Mammary epithelial cell (primary cell): ENCODE measurements at regions of chr5 and their contacts with region 1.

Region 1: DNA sequence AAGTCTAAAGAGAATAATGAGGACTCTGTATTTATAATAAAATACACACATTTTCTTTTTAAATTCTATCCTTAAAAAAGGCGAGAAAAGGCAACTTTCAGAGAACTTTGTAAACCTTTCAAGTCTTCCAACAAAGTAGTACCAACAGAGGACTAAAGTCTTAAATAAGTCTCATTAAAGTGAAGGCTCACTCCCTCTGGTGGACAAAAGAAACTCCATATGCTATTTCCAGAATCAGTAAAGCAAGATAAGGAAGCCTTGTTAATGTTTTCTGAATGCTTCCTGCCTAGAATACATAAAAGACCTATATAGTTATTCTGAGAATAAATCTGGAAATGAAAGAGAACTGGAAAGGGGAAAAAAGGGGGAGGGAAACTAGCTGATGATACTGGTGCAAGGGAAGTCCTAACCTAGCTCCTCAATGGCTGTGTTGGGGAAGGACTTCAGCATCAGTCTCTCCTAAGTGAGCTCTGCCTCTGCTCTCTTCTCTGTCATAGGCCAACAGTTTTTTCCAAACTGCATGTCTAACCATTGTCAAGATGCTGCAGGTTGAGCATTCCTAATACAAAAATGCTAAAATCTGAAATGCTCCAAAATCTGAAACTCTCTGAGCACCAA is 7.2 kb downstream of the HMGCS1 start:
- DNase-seq: no peak
- H3K4me3 ChIP-seq: no peak overlapping the region
- H3K27ac ChIP-seq: no peak overlapping the region
- H3K4me1 ChIP-seq: peaks cover 34% of the 10 kb centered on the region
- H3K27me3 ChIP-seq: no peaks in the 10 kb centered on the region
- CTCF ChIP-seq: peak; percentile 59 to 67

Region 2: DNA sequence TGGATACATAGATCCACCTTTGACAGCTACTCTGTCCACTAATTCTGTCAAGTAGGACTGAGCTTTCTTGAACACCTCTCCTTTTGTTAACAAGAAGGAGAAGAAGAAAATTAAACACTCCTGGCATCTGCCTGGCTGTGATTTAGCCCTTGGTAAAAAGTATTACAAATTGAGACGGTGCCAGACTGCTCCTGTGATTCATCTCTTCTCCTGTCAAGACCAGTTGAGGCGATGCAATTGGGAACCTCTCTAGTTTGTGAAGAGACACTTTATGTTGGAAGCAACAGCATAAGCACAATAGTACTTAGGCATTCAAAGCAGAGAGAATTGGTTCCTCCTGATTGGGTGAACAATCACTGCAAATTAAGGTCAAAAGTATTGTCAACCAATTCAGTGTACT is 810.1 kb before region 1 on chr5:
- CTCF ChIA-PET with region 1: no interaction called
- dilution Hi-C with region 1: no loop called
- in situ Hi-C with region 1: no loop called
- intact Hi-C with region 1: no loop called
- DNase-seq: peak; percentile 70
- H3K4me3 ChIP-seq: no peak overlapping the region
- H3K27ac ChIP-seq: no peak overlapping the region
- H3K4me1 ChIP-seq: peaks cover 12% of the 10 kb centered on the region
- H3K27me3 ChIP-seq: no peaks in the 10 kb centered on the region
- CTCF ChIP-seq: no peak

Region 3: DNA sequence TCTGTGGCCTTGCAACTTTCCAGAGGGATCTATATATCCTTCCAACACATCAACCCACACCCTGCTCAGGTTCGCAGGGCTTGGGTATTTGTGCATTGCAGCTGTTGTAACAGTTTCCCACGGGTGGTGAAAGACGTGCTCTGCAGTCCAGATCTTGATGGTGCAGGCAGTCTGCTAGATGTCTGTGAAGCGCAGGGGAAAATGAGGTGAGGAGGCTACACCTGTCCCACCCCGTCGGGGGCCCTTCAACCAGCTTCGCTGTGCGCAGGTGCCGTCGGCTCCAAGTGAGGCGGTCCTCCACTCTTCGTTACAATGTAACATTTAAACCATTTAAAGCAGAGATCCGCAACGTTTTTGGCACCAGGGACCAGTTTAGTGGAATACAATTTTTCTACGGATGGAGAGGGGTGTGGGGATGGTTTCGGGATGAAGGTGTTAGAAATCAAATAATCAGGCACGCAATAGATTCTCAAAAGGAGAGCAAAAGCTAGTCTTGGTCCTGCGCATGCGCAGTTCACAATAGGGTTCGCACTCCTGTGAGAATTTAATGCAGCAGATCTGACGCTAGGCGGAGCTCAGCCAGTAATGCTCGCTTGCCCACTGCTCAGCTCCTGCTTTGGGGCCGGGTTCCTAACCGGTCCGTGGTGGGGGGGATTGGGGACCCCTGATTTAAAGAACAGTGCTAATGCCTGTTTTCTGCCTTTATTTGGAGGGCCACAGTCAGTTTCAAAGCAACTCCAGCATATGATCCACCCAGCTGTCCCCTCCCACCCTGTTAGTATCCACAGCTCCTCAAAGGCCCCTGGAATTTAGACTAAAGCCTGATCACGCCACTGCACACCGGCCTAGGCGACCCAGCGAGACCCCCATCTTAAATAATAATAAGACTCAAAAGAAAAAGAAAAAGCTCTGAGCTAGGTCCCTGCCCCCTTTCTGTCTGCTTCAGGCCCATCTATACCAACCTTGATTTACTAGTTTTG is 397.3 kb before region 1 on chr5:
- CTCF ChIA-PET with region 1: no interaction called
- dilution Hi-C with region 1: no loop called
- in situ Hi-C with region 1: no loop called
- intact Hi-C with region 1: loop called (anchors 5 kb)
- DNase-seq: peak; percentile 71
- H3K4me3 ChIP-seq: peak overlapping the region; percentile 45 to 52 (median 46)
- H3K27ac ChIP-seq: no peak overlapping the region
- H3K4me1 ChIP-seq: no peaks in the 10 kb centered on the region
- H3K27me3 ChIP-seq: no peaks in the 10 kb centered on the region
- CTCF ChIP-seq: peak; percentile 79 to 86

Region 4: GRCh38 chr5:43019614-43020293 is 286.3 kb before region 1 on chr5:
- CTCF ChIA-PET with region 1: interaction called, 13 read pairs
- dilution Hi-C with region 1: no loop called
- in situ Hi-C with region 1: no loop called
- intact Hi-C with region 1: no loop called
- DNase-seq: no peak
- H3K4me3 ChIP-seq: no peak overlapping the region
- H3K27ac ChIP-seq: no peak overlapping the region
- H3K4me1 ChIP-seq: no peaks in the 10 kb centered on the region
- H3K27me3 ChIP-seq: no peaks in the 10 kb centered on the region
- CTCF ChIP-seq: no peak

Region 5: GRCh38 chr5:43073597-43074546 is 232.2 kb before region 1 on chr5:
- CTCF ChIA-PET with region 1: interaction called, 4 read pairs
- dilution Hi-C with region 1: no loop called
- in situ Hi-C with region 1: no loop called
- intact Hi-C with region 1: loop called (anchors 1 kb)
- DNase-seq: peak; percentile 21
- H3K4me3 ChIP-seq: no peak overlapping the region
- H3K27ac ChIP-seq: no peak overlapping the region
- H3K4me1 ChIP-seq: peaks cover 4% of the 10 kb centered on the region
- H3K27me3 ChIP-seq: no peaks in the 10 kb centered on the region
- CTCF ChIP-seq: peak; percentile 66 to 67

Region 6: GRCh38 chr5:43105369-43106289 is 200.4 kb before region 1 on chr5:
- CTCF ChIA-PET with region 1: no interaction called
- dilution Hi-C with region 1: no loop called
- in situ Hi-C with region 1: no loop called
- intact Hi-C with region 1: loop called (anchors 5 kb)
- DNase-seq: peak; percentile 88
- H3K4me3 ChIP-seq: peak overlapping the region; percentile 6 to 42 (median 35)
- H3K27ac ChIP-seq: no peak overlapping the region
- H3K4me1 ChIP-seq: peaks cover 4% of the 10 kb centered on the region
- H3K27me3 ChIP-seq: no peaks in the 10 kb centered on the region
- CTCF ChIP-seq: peak; percentile 100

Region 7: DNA sequence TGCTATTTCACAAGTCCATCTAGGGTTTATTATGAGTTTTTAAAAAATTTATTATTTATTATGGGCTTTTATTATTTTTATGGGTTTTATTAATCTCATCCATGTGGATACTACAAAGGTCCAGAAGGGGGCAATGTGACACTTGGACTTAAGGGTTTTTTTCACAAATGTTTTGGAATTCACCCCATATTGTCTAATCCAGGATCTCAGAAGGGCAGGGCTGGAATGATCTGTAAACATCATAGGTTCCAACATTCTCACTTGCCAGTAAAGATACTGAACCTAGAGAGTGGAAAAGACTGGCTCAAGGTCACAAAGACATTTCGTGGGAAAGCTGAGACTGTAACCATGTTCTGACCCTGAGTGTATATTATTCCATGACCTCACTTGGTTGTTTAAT is 78.4 kb before region 1 on chr5:
- CTCF ChIA-PET with region 1: no interaction called
- dilution Hi-C with region 1: no loop called
- in situ Hi-C with region 1: no loop called
- intact Hi-C with region 1: loop called (anchors 1 kb)
- DNase-seq: peak; percentile 38
- H3K4me3 ChIP-seq: no peak overlapping the region
- H3K27ac ChIP-seq: no peak overlapping the region
- H3K4me1 ChIP-seq: no peaks in the 10 kb centered on the region
- H3K27me3 ChIP-seq: no peaks in the 10 kb centered on the region
- CTCF ChIP-seq: peak; percentile 51 to 55

Region 8: GRCh38 chr5:43320846-43321245 is 14.8 kb after region 1 on chr5:
- CTCF ChIA-PET with region 1: no interaction called
- dilution Hi-C with region 1: no loop called
- in situ Hi-C with region 1: no loop called
- intact Hi-C with region 1: no loop called
- DNase-seq: no peak
- H3K4me3 ChIP-seq: no peak overlapping the region
- H3K27ac ChIP-seq: no peak overlapping the region
- H3K4me1 ChIP-seq: peaks cover 4% of the 10 kb centered on the region
- H3K27me3 ChIP-seq: no peaks in the 10 kb centered on the region
- CTCF ChIP-seq: no peak